B cell (primary cell): ENCODE measurements at regions of chr5 and their contacts with region 1.

Region 1: DNA sequence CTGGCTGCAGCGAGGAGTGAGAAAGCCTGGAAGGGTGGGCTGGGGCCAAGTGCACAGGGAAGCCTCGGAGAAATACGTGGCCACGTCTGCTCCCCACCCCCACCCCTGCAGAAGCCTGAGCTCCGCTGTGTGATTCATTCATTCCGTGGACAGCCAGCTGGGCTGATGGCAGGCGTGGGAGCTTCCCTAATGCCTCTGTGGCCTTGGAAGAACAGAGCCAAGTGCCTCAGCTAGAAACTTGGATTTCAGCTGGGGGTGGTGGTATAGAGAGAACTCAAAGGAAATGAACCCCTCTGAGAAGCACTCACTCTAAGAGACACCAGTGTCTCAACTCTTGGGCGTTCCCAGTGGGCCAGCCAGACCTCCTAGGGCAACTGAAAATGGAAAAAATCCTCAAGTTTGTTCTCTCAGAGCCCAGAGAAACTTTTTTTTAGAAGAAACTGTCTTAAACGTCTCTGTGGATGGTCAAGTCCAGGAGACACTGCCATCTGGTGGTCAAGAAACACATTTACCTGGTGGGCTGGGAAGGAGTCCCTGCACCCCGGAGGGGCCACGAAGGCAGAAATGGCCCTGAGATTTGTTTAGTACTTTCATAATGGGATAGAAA is 18.0 kb downstream of the ATOX1 start:
- DNase-seq: peak; percentile 73
- ATAC-seq: peak; percentile 74
- H3K4me3 ChIP-seq: no peak overlapping the region
- H3K4me3 Mint-ChIP-seq: no peak overlapping the region
- H3K27ac ChIP-seq: no peak overlapping the region
- H3K27ac Mint-ChIP-seq: no peak overlapping the region
- H3K4me1 ChIP-seq: peaks cover 13 to 14% of the 10 kb centered on the region in 2 donors
- H3K4me1 Mint-ChIP-seq: peaks cover 19% of the 10 kb centered on the region
- H3K27me3 ChIP-seq: no peaks in the 10 kb centered on the region
- H3K27me3 Mint-ChIP-seq: no peaks in the 10 kb centered on the region
- CTCF ChIP-seq: peak; percentile 92

Region 2: GRCh38 chr5:151651997-151652645 is 88.3 kb before region 1 on chr5:
- CTCF ChIA-PET with region 1: interaction called, 156 read pairs
- POLR2A ChIA-PET with region 1: no interaction called
- intact Hi-C with region 1: no loop called
- DNase-seq: peak; percentile 77
- ATAC-seq: peak; percentile 97
- H3K4me3 ChIP-seq: no peak overlapping the region
- H3K4me3 Mint-ChIP-seq: no peak overlapping the region
- H3K27ac ChIP-seq: no peak overlapping the region
- H3K27ac Mint-ChIP-seq: no peak overlapping the region
- H3K4me1 ChIP-seq: no peaks in the 10 kb centered on the region
- H3K4me1 Mint-ChIP-seq: no peaks in the 10 kb centered on the region
- H3K27me3 ChIP-seq: peaks cover 0 to 3% (median 0%) of the 10 kb centered on the region in 4 experiments
- H3K27me3 Mint-ChIP-seq: peaks cover 4% of the 10 kb centered on the region
- CTCF ChIP-seq: peak; percentile 80

Region 3: DNA sequence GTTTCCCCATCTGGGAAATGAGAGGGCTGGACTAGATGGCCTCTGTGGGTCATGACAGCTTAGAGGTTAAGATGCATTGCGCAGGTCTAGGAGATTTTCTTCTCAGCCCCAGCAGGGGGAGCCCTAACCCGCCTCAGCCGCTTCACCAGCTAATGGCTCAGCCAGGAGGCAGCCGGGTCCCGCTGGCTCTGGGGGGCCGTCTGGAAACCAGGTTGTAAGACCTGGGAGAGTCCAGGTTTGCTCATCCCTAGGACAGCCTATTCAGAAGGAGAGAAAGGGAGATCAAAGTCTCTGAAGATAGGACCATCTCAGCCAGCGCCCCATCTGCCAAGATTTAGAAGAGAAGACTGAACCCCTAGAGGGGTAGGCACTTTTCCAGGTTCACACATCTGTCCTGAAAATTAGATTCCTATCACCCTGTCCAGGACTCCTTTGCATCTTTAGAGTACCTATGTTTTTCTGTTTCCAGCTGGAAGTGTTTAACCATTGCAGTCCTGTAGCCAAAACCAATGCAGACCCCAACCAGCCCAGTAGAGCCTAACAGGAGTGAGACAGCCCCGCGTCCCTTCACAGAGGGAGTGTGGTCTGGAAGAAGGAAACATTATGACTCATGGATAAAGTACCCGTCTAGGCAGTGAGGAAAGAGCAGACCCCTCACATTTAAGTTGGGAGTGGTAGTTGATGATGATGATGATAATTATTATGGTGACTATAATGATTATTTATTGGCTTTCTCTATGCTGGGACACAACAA is 81.3 kb before region 1 on chr5:
- CTCF ChIA-PET with region 1: interaction called, 156 read pairs
- POLR2A ChIA-PET with region 1: no interaction called
- intact Hi-C with region 1: loop called (anchors 1 kb)
- DNase-seq: peak; percentile 86
- ATAC-seq: peak; percentile 90
- H3K4me3 ChIP-seq: no peak overlapping the region
- H3K4me3 Mint-ChIP-seq: no peak overlapping the region
- H3K27ac ChIP-seq: no peak overlapping the region
- H3K27ac Mint-ChIP-seq: no peak overlapping the region
- H3K4me1 ChIP-seq: peaks cover 15 to 22% of the 10 kb centered on the region in 2 donors
- H3K4me1 Mint-ChIP-seq: peaks cover 25% of the 10 kb centered on the region
- H3K27me3 ChIP-seq: peaks cover 0 to 4% (median 0%) of the 10 kb centered on the region in 4 experiments
- H3K27me3 Mint-ChIP-seq: peaks cover 4% of the 10 kb centered on the region
- CTCF ChIP-seq: peak; percentile 89

Region 4: DNA sequence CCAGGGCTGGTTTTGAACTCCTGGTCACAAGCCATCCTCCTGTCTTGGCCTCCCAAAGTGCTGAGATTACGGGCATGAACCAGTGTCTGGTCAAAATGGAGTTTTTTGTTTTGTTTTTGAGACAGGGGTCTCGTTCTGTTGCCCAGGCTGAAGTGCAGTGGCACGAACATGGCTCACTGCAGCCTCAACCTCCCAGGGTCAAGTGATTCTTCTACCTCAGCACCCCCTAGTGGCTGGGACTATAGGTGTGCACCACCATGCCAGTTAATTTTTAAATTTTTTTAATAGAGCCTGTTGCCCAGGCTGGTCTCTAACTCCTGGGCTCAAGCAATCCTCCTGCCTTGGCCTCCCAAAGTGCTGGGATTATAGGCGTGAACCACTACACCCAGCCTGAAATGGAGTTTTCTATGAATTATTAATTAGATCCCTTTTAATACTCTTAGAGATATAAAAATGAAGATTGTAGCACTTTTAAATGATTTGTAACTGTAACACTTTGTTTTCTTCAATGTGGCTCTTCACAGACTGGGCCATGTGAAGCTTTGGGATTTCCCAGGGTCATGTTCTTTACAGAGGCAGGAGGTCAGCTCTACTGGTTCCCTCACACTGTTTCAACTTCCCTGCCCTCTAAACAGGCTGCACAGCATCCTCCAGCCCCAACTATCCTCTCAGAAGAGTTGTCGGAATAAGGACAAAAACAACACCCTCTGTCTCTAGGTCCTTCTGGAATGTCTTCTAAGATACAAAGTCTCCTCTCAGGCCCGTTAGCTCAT is 21.0 kb before region 1 on chr5:
- CTCF ChIA-PET with region 1: interaction called, 29 read pairs
- POLR2A ChIA-PET with region 1: no interaction called
- intact Hi-C with region 1: no loop called
- DNase-seq: no peak
- ATAC-seq: no peak
- H3K4me3 ChIP-seq: no peak overlapping the region
- H3K4me3 Mint-ChIP-seq: no peak overlapping the region
- H3K27ac ChIP-seq: no peak overlapping the region
- H3K27ac Mint-ChIP-seq: no peak overlapping the region
- H3K4me1 ChIP-seq: peaks cover 27% of the 10 kb centered on the region in 2 donors
- H3K4me1 Mint-ChIP-seq: peaks cover 34% of the 10 kb centered on the region
- H3K27me3 ChIP-seq: no peaks in the 10 kb centered on the region
- H3K27me3 Mint-ChIP-seq: peaks cover 3% of the 10 kb centered on the region
- CTCF ChIP-seq: peak; percentile 29

Region 5: GRCh38 chr5:151751091-151751490 is 10.7 kb after region 1 on chr5:
- CTCF ChIA-PET with region 1: interaction called, 19 read pairs
- POLR2A ChIA-PET with region 1: no interaction called
- intact Hi-C with region 1: no loop called
- DNase-seq: no peak
- ATAC-seq: no peak
- H3K4me3 ChIP-seq: no peak overlapping the region
- H3K4me3 Mint-ChIP-seq: no peak overlapping the region
- H3K27ac ChIP-seq: no peak overlapping the region
- H3K27ac Mint-ChIP-seq: no peak overlapping the region
- H3K4me1 ChIP-seq: peaks cover 14 to 22% of the 10 kb centered on the region in 2 donors
- H3K4me1 Mint-ChIP-seq: peaks cover 35% of the 10 kb centered on the region
- H3K27me3 ChIP-seq: no peaks in the 10 kb centered on the region
- H3K27me3 Mint-ChIP-seq: no peaks in the 10 kb centered on the region
- CTCF ChIP-seq: no peak

Region 6: GRCh38 chr5:151758430-151759241 is 18.2 kb after region 1 on chr5 and contains the start of gene ATOX1:
- CTCF ChIA-PET with region 1: interaction called, 13 read pairs
- POLR2A ChIA-PET with region 1: no interaction called
- intact Hi-C with region 1: no loop called
- DNase-seq: peak; percentile 92
- ATAC-seq: peak; percentile 100
- H3K4me3 ChIP-seq: peak within 1 kb of the TSS; percentile 62 to 94 (median 81)
- H3K4me3 Mint-ChIP-seq: peak within 1 kb of the TSS; percentile 82
- H3K27ac ChIP-seq: peak within 1 kb of the TSS; percentile 52 to 75
- H3K27ac Mint-ChIP-seq: peak within 1 kb of the TSS; percentile 74
- H3K4me1 ChIP-seq: peaks cover 22 to 29% of the 10 kb centered on the region in 2 donors
- H3K4me1 Mint-ChIP-seq: peaks cover 36% of the 10 kb centered on the region
- H3K27me3 ChIP-seq: no peaks in the 10 kb centered on the region
- H3K27me3 Mint-ChIP-seq: no peaks in the 10 kb centered on the region
- CTCF ChIP-seq: no peak
- total RNA-seq, gene ATOX1: 32.0 and 37.3 TPM in 2 replicates

Region 7: DNA sequence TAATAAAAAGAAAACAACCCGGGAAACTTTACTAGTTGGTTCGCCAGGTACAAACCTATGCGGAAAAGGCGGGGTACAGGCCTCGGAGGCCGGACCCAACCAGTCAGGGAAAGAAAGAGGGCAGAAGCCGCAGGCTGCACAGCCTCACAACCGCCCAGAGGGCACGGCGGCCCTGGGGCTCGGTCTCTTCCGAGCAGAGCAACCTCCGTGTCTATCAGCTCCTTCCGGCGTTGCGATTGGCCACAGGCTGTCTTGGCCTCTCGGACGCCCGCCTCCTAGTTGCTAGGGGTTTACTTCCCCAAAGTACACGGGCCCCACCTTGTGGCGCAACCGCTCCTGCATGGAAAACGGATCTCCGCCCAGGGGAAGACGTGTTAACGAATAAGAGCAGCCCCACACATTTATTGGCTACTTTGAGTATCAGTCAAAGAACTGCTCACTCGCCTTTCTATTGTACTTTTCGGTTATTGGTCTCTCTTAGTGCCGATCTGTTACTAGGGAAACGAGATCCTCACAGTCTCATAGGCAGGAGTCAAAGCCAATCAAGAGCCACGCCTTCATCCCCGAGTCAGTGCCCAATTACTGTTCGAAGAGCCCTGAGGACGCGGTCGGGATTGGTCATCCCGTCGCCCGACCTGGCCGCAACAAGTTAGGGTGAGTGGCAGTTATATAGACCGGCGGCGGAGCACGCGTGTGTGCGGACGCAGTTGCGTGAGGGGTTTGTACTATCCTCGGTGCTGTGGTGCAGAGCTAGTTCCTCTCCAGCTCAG is 31.0 kb after region 1 on chr5 and contains the start of gene G3BP1:
- CTCF ChIA-PET with region 1: interaction called, 11 read pairs
- POLR2A ChIA-PET with region 1: interaction called, 4 read pairs
- intact Hi-C with region 1: loop called (anchors 2 kb)
- DNase-seq: peak; percentile 100
- ATAC-seq: peak; percentile 74
- H3K4me3 ChIP-seq: peak within 1 kb of the TSS; percentile 71 to 91 (median 81)
- H3K4me3 Mint-ChIP-seq: peak within 1 kb of the TSS; percentile 95
- H3K27ac ChIP-seq: peak within 1 kb of the TSS; percentile 87 to 92
- H3K27ac Mint-ChIP-seq: peak within 1 kb of the TSS; percentile 93
- H3K4me1 ChIP-seq: peaks cover 42 to 45% of the 10 kb centered on the region in 2 donors
- H3K4me1 Mint-ChIP-seq: peaks cover 44% of the 10 kb centered on the region
- H3K27me3 ChIP-seq: no peaks in the 10 kb centered on the region
- H3K27me3 Mint-ChIP-seq: no peaks in the 10 kb centered on the region
- CTCF ChIP-seq: peak; percentile 66
- total RNA-seq, gene G3BP1: 159 and 173 TPM in 2 replicates